ENCODE measurements at regions of chr6 and their contacts with region 1.

Region 1: DNA sequence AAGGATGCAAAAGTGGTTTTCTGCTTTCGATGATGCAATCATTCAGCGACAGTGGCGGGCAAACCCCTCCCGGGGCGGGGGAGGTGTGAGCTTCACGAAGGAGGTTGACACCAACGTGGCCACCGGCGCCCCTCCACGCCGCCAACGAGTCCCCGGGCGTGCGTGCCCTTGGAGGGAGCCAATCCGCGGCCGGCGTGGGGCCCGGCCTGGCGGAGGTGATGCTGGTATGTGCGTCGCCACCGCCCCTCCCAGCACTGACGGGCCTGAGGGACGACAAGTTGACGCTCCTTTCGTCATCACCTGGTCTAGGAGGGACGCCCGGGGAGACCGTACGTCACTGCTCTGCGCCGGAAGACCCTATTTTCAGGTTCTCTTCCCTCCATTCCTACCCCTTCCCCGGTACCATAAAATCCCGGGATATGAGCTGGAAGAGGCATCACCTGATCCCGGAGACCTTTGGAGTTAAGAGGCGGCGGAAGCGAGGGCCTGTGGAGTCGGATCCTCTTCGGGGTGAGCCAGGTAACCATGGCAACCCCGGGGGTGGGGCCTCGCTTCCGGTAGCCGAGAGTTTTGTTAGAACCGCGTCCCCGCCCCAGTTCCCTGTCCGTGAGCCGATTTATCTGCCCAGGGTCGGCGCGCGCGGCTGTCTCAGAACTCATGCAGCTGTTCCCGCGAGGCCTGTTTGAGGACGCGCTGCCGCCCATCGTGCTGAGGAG is at the start of gene DXO:
- DNase-seq: peak; percentile 99
- CTCF ChIP-seq: no peak

Region 2: DNA sequence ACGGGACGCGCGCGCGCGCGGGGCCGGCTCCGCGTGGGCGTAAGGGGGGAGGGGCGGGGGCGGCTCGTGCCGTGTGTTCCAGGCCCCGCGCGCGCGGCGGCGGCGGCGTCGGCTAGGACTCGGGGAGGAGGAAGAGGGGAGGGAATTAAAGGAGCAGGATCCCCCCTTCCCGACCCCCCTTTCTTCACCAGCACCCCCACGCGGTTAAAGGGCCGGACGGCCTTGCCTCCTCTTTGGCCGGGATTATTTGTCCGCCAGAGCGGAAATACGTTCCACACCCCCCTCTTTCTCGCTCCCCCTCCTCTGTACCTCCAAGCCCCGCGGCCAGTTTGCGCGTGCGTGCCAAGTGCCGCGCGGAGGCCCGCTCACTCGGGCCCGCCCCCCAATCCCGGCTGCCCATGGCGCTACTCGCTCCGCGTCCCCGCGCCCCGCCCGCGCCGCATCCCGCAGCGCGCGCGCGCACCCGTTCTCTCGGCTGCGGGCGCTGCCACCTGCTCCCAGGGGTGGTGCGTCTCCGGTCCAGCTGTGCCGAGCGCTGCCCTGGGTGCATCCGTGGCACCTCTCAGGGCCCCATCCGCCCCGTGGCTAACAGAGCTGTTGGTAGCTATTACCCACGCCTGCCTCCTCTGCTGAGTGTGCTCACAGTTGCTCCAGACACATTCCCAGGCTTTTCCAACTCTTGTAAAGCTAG is 70.1 kb before region 1 on chr6 and contains the start of gene ZBTB12:
- CTCF ChIA-PET with region 1: no interaction called
- POLR2A ChIA-PET with region 1: no interaction called
- DNase-seq: peak; percentile 94
- CTCF ChIP-seq: no peak

Region 3: DNA sequence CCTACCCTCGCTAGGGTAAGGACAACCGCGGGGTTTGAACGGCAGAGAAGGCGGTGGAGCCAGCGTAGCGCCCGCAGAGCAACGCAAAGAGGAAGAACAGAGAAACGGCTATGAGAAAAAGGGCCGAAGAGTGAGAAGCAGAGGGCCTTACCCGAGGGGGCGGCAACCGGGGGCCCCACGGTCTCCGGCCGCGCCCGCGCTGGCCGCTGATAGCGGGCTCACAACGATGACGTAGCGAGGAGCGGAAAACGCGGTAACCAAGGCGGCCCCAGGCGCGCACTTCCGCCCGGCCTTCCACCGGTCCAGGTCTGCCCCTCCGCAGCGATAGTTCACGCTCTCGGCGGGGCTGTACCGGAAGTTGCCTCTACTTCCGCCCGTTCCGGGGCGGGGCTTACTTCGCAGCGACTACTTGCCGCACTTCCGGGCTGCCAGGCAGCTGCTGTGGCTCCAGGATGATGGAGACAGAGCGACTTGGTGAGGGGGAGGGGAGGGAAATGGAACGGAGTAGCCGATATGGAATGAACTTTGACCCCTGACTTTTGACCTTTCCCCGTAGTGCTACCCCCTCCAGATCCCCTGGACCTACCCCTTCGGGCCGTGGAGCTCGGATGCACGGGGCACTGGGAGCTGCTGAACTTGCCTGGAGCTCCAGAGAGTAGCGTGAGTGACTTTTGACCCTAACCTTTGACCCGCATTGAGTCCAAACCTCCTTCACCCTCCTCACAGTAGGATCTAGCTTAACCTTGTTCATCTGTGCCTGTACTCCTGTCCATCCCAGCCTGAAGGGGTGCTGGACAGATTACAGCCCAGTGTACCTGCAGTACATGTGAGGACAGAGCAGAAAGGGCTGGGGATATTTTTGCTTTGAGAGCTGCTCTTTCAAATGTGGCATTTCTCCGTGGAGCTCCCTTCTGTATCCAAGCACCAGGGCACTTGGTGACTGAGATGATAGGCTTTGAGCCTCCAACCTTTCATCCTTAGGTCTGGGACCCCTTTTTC is 13.1 kb before region 1 on chr6 and contains the starts of genes NELFE and SKIC2:
- CTCF ChIA-PET with region 1: interaction called, 6 read pairs
- POLR2A ChIA-PET with region 1: interaction called, 15 read pairs
- DNase-seq: peak; percentile 100
- CTCF ChIP-seq: no peak

Measured in GM10248 (cell line).